ENCODE measurements at regions of chr10 and their contacts with region 1.

Region 1: GRCh38 chr10:15824498-15824897 is 35.8 kb downstream of the MINDY3 start:
- DNase-seq: peak in 2 of 4 donors; percentile 39 to 53
- ATAC-seq: peak; percentile 30
- H3K4me3 ChIP-seq: no peak overlapping the region
- H3K27ac ChIP-seq: no peak overlapping the region
- H3K4me1 ChIP-seq: no peaks in the 10 kb centered on the region
- H3K27me3 ChIP-seq: no peaks in the 10 kb centered on the region
- CTCF ChIP-seq: peak; percentile 26 to 29

Region 2: GRCh38 chr10:15433850-15434537 is 390.5 kb before region 1 on chr10:
- intact Hi-C with region 1: loop called in 1 of 2 experiments (anchors 10 kb)
- DNase-seq: peak in 2 of 4 donors; percentile 67 to 75
- ATAC-seq: peak; percentile 82
- H3K4me3 ChIP-seq: no peak overlapping the region
- H3K27ac ChIP-seq: no peak overlapping the region
- H3K4me1 ChIP-seq: no peaks in the 10 kb centered on the region
- H3K27me3 ChIP-seq: peaks cover 0 to 14% of the 10 kb centered on the region in 2 donors
- CTCF ChIP-seq: peak; percentile 47 to 66

Measured in left lung (tissue), 14 donors.